ENCODE measurements at regions of chr1 and their contacts with region 1.

Region 1: DNA sequence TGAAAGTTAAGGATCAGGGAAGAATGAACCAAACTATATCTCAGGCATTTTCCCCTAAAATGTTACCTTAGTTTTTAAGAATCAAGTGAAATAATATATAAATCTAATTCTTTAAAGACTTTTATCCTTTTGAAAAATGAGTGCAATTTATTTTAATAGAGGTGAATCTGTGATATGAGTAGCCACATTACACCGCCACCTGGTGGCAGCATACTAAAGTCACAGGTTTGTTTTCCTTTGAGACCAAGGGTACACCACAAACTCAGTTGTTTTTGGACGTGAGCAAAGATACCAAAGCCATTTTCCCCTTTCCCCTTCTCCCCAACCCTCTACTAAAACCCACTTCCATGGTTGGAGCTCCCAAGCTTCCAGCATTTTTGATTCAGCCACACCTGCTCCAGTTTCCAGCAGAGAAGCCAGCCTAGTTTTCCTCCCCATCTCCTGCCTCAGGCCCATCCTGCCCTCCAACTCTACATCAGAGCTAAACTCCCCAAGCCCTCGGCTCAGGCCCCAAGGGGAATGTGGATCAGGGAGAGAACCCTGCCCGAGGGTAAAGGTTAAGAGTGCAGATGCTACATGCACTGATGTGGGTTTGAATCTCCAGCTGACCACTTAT is 22.9 kb upstream of the LDLRAP1 start:
- DNase-seq: peak in 1 of 2 donors; percentile 75
- H3K4me3 ChIP-seq: no peak overlapping the region
- H3K27ac ChIP-seq: no peak overlapping the region
- H3K4me1 ChIP-seq: no peaks in the 10 kb centered on the region
- H3K27me3 ChIP-seq: no peaks in the 10 kb centered on the region
- CTCF ChIP-seq: peak; percentile 73 to 82 (median 74)

Region 2: GRCh38 chr1:25503551-25504426 is 16.8 kb before region 1 on chr1:
- intact Hi-C with region 1: loop called (anchors 1 kb)
- DNase-seq: peak in 1 of 2 donors; percentile 75
- H3K4me3 ChIP-seq: no peak overlapping the region
- H3K27ac ChIP-seq: peak overlapping the region; percentile 52 to 54
- H3K4me1 ChIP-seq: peaks cover 24 to 53% of the 10 kb centered on the region in 2 donors
- H3K27me3 ChIP-seq: no peaks in the 10 kb centered on the region
- CTCF ChIP-seq: peak; percentile 46 to 67 (median 54)

Measured in ascending aorta (tissue), 2 donors.